ENCODE measurements at regions of chr17 and their contacts with region 1.

Region 1: GRCh38 chr17:33674685-33675084 is 381.6 kb upstream of the ASIC2 start:
- DNase-seq: peak in 1 of 2 donors; percentile 49
- ATAC-seq: peak; percentile 71 to 85 (median 78)
- H3K4me3 ChIP-seq: no peak overlapping the region
- H3K27ac ChIP-seq: no peak overlapping the region
- H3K4me1 ChIP-seq: no peaks in the 10 kb centered on the region
- H3K27me3 ChIP-seq: peaks cover 0 to 5% (median 0%) of the 10 kb centered on the region in 3 donors
- CTCF ChIP-seq: peak; percentile 69

Region 2: DNA sequence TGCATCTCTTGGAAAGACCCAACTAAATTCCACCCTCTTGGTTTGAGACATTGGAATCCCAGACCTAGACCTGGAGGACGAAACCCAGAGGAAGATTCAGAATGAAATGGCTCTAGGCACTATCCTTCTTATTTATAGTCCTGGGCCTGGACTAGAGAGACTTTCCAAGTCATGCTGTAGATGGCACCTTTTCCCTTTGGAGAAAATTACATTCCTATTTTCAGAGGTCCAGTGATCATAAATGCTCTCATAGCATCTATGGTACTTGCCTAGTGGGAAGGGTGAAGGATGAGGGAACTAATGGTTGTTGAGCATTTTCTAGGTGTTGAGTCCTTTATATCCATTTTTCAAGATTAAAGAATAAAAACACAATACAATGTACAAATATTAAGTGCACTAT is 645.9 kb before region 1 on chr17:
- intact Hi-C with region 1: loop called (anchors 2 to 10 kb)
- DNase-seq: no peak
- ATAC-seq: no peak
- H3K4me3 ChIP-seq: no peak overlapping the region
- H3K27ac ChIP-seq: no peak overlapping the region
- H3K4me1 ChIP-seq: no peaks in the 10 kb centered on the region
- H3K27me3 ChIP-seq: peaks cover 0 to 5% (median 0%) of the 10 kb centered on the region in 3 donors
- CTCF ChIP-seq: peak; percentile 22

Region 3: GRCh38 chr17:33038740-33039139 is 635.9 kb before region 1 on chr17:
- intact Hi-C with region 1: loop called in 1 of 2 experiments (anchors 10 kb)
- DNase-seq: peak in 1 of 2 donors; percentile 29
- ATAC-seq: peak in 1 of 4 donors; percentile 53
- H3K4me3 ChIP-seq: no peak overlapping the region
- H3K27ac ChIP-seq: no peak overlapping the region
- H3K4me1 ChIP-seq: no peaks in the 10 kb centered on the region
- H3K27me3 ChIP-seq: peaks cover 0 to 9% (median 0%) of the 10 kb centered on the region in 3 donors
- CTCF ChIP-seq: peak; percentile 60

Region 4: GRCh38 chr17:33506889-33507650 is 167.6 kb before region 1 on chr17:
- intact Hi-C with region 1: loop called in 1 of 2 experiments (anchors 10 kb)
- DNase-seq: no peak
- ATAC-seq: no peak
- H3K4me3 ChIP-seq: no peak overlapping the region
- H3K27ac ChIP-seq: no peak overlapping the region
- H3K4me1 ChIP-seq: no peaks in the 10 kb centered on the region
- H3K27me3 ChIP-seq: no peaks in the 10 kb centered on the region
- CTCF ChIP-seq: no peak

Region 5: DNA sequence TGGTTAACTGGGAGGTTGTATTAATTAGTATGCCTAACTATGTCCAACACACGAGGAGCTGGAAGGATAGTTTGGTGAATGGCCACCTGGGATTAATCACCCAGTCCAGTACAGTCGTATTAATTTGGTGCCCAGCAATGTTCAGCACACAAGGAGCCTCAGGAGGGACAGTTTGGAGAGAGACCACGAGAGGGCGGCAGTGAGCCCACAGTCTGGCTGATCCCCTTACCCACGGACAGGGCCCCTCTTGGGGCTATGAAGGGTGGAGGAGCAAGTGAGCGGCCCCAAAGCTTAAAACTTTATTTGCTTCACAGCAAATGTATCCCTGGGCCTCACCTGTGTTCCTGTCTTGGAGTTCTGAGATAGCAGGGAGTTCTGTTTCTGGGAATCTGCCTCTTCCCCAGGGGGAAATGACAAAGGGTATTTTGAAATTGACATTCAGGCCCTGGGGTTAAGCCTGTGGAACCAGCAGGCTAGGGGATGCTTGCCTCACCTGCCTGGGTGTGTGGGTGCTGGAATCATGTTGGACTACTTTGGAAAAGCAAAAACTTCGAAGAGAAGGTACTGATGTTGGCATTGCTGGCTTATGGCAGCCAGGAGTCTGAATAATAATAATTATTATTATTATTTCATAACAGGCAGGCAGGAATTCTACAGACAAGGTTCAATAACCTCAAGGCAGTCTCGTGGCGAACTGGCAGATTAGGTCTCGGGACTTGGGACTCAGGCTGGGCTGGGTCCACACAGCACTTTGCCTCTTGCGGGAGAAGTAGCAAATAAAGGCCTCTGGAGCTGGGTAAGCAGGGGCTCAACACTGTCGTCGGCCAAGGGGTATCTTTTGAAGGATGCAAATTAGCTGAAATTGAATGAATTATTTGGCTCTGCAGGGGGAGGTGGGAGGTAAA is 154.0 kb before region 1 on chr17:
- intact Hi-C with region 1: loop called (anchors 10 kb)
- DNase-seq: peak in 1 of 2 donors; percentile 18
- ATAC-seq: peak in 1 of 4 donors; percentile 61
- H3K4me3 ChIP-seq: no peak overlapping the region
- H3K27ac ChIP-seq: no peak overlapping the region
- H3K4me1 ChIP-seq: no peaks in the 10 kb centered on the region
- H3K27me3 ChIP-seq: peaks cover 0 to 5% (median 0%) of the 10 kb centered on the region in 3 donors
- CTCF ChIP-seq: peak; percentile 36